ENCODE measurements at regions of chr21 and their contacts with region 1.

Region 1: DNA sequence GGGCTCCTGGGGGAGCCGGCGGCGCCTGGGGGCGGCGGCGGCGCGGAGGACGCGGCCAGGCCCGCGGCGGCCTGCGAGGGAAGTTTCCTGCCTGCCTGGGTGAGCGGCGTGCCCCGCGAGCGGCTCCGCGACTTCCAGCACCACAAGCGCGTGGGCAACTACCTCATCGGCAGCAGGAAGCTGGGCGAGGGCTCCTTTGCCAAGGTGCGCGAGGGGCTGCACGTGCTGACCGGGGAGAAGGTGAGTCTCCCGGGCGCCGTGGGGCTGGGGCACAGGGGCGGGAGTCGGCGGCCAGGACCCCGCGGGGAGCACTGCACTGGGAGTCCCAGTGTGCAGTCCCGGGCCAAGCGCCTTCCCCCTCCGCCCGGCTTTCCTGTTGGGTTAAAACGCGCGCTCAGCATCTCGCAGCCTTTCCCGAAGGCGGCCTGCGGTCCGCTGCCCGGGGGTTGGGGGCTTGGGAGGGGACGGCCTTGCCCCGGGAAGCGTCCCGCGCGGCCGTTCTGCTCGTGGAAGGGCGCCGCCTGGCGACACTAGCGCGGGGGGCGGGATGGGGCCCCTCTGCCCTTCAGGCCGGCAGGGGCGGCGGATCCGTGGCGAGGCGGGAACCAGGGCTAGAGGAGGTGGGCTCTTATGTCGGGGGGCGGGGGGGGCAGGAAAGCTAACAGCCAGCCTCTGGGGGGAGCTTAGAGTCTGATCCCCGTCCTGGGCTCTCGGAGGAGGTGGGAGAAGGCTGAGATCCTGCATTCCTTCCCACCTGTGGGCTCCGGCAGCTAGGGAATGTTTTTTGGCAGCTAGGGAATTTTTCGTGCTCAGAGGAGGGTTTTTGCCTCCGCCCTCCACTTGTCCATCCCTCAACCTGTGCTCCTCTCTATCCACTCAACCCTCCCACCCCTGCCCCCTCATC is 1.1 kb downstream of the HUNK start:
- DNase-seq: peak; percentile 45
- H3K4me3 Mint-ChIP-seq: peak overlapping the region; percentile 36
- H3K27ac Mint-ChIP-seq: no peak overlapping the region
- H3K4me1 Mint-ChIP-seq: peaks cover 5% of the 10 kb centered on the region
- H3K27me3 Mint-ChIP-seq: peaks cover 52% of the 10 kb centered on the region

Region 2: DNA sequence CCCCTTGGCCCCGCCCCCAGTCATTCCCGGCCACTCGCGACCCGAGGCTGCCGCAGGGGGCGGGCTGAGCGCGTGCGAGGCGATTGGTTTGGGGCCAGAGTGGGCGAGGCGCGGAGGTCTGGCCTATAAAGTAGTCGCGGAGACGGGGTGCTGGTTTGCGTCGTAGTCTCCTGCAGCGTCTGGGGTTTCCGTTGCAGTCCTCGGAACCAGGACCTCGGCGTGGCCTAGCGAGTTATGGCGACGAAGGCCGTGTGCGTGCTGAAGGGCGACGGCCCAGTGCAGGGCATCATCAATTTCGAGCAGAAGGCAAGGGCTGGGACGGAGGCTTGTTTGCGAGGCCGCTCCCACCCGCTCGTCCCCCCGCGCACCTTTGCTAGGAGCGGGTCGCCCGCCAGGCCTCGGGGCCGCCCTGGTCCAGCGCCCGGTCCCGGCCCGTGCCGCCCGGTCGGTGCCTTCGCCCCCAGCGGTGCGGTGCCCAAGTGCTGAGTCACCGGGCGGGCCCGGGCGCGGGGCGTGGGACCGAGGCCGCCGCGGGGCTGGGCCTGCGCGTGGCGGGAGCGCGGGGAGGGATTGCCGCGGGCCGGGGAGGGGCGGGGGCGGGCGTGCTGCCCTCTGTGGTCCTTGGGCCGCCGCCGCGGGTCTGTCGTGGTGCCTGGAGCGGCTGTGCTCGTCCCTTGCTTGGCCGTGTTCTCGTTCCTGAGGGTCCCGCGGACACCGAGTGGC is 214.3 kb before region 1 on chr21 and contains the start of gene SOD1:
- CTCF ChIA-PET with region 1: no interaction called
- intact Hi-C with region 1: loop called (anchors 10 kb)
- DNase-seq: peak; percentile 95
- H3K4me3 Mint-ChIP-seq: peak within 1 kb of the TSS; percentile 100
- H3K27ac Mint-ChIP-seq: peak within 1 kb of the TSS; percentile 99
- H3K4me1 Mint-ChIP-seq: peaks cover 68% of the 10 kb centered on the region
- H3K27me3 Mint-ChIP-seq: no peaks in the 10 kb centered on the region
- total RNA-seq, gene SOD1: 281 to 297 TPM

Region 3: GRCh38 chr21:31786164-31786920 is 87.6 kb before region 1 on chr21:
- CTCF ChIA-PET with region 1: interaction called, 4 read pairs
- intact Hi-C with region 1: loop called (anchors 2 kb)
- DNase-seq: no peak
- H3K4me3 Mint-ChIP-seq: no peak overlapping the region
- H3K27ac Mint-ChIP-seq: no peak overlapping the region
- H3K4me1 Mint-ChIP-seq: no peaks in the 10 kb centered on the region
- H3K27me3 Mint-ChIP-seq: peaks cover 7% of the 10 kb centered on the region